H1 (cell line): ENCODE measurements at regions of chr12 and their contacts with region 1.

Region 1: DNA sequence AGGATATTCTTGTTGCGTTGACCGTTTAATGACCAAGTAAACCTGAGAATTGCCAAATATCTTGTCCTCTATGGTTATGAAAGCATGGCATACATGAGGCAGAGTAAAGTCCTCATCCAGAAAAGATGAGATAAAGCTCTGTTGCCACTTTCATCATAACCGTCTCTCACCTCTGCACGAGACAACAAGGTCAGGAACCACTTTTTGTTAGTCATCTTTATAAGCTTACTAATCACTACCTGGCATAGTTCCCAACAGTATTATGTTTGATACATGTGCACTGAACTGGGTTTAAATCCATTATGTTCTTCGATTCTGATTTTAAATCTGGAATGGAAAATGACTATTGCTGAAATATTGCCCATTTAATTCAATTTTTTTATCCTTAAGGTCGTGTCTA is 31.2 kb downstream of the PTPRB start:
- DNase-seq: no peak
- H3K4me3 ChIP-seq: no peak overlapping the region
- H3K27ac ChIP-seq: no peak overlapping the region
- H3K4me1 ChIP-seq: peaks cover 0 to 3% (median 0%) of the 10 kb centered on the region in 4 experiments; a peak in 2 of 7 replicates
- H3K27me3 ChIP-seq: peaks cover 0 to 14% (median 11%) of the 10 kb centered on the region in 4 experiments; a peak in 5 of 7 replicates
- CTCF ChIP-seq: no peak
- EP300 ChIP-seq: no peak
- POLR2A ChIP-seq: no peak
- RAD21 ChIP-seq: no peak

Region 2: GRCh38 chr12:70590051-70590450 is 15.9 kb before region 1 on chr12:
- CTCF ChIA-PET with region 1: interaction called, 12 read pairs
- POLR2A ChIA-PET with region 1: no interaction called
- DNase-seq: peak; percentile 38 to 81
- H3K4me3 ChIP-seq: no peak overlapping the region
- H3K27ac ChIP-seq: no peak overlapping the region
- H3K4me1 ChIP-seq: no peaks in the 10 kb centered on the region
- H3K27me3 ChIP-seq: no peaks in the 10 kb centered on the region
- CTCF ChIP-seq: peak; percentile 75 to 93 (median 85)
- EP300 ChIP-seq: no peak
- POLR2A ChIP-seq: no peak
- RAD21 ChIP-seq: peak; percentile 85 to 89